Activated CD8-positive, alpha-beta T cell treated with anti-CD3 and anti-CD28 coated beads, Interleukin-2, amount 10 ng/mL, durations not matched to agents 7 days and 5 days (primary cell): ENCODE measurements at regions of chr7 and their contacts with region 1.

Region 1: GRCh38 chr7:148987010-148987750 is 41.1 kb downstream of the PDIA4 start:
- DNase-seq: peak; percentile 89
- ATAC-seq: peak; percentile 86
- H3K4me3 Mint-ChIP-seq: peak overlapping the region; percentile 97
- H3K27ac Mint-ChIP-seq: peak overlapping the region; percentile 97
- H3K4me1 Mint-ChIP-seq: peaks cover 46% of the 10 kb centered on the region
- H3K27me3 Mint-ChIP-seq: peaks cover 24% of the 10 kb centered on the region

Region 2: DNA sequence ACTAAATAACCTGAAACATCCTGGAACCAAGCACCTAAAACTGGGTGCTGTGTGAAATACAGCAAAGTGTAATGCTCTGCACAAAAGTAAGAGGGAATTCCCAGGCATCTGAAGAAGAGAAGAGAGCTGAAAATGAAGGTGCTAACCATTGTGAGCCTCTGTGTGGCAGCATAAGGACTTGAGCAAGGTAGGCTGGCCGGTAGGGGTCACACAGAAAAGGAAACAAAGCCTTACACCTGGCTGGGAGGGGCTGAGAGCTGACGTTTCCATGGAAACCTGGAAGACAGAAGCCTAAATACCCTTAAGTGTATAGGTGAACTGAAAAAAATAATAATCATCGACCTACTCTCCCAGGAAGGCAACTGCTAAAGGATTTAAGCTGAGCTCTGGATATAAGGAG is 239.9 kb before region 1 on chr7:
- CTCF ChIA-PET with region 1: no interaction called
- POLR2A ChIA-PET with region 1: no interaction called
- DNase-seq: no peak
- ATAC-seq: no peak
- H3K4me3 Mint-ChIP-seq: no peak overlapping the region
- H3K27ac Mint-ChIP-seq: no peak overlapping the region
- H3K4me1 Mint-ChIP-seq: peaks cover 6% of the 10 kb centered on the region
- H3K27me3 Mint-ChIP-seq: no peaks in the 10 kb centered on the region

Region 3: GRCh38 chr7:149071641-149072437 is 84.7 kb after region 1 on chr7:
- CTCF ChIA-PET with region 1: interaction called, 12 read pairs
- POLR2A ChIA-PET with region 1: no interaction called
- DNase-seq: peak; percentile 62
- ATAC-seq: peak; percentile 73
- H3K4me3 Mint-ChIP-seq: no peak overlapping the region
- H3K27ac Mint-ChIP-seq: peak overlapping the region; percentile 34
- H3K4me1 Mint-ChIP-seq: peaks cover 7% of the 10 kb centered on the region
- H3K27me3 Mint-ChIP-seq: no peaks in the 10 kb centered on the region